GM12878 (cell line): ENCODE measurements at regions of chr19 and their contacts with region 1.

Region 1: DNA sequence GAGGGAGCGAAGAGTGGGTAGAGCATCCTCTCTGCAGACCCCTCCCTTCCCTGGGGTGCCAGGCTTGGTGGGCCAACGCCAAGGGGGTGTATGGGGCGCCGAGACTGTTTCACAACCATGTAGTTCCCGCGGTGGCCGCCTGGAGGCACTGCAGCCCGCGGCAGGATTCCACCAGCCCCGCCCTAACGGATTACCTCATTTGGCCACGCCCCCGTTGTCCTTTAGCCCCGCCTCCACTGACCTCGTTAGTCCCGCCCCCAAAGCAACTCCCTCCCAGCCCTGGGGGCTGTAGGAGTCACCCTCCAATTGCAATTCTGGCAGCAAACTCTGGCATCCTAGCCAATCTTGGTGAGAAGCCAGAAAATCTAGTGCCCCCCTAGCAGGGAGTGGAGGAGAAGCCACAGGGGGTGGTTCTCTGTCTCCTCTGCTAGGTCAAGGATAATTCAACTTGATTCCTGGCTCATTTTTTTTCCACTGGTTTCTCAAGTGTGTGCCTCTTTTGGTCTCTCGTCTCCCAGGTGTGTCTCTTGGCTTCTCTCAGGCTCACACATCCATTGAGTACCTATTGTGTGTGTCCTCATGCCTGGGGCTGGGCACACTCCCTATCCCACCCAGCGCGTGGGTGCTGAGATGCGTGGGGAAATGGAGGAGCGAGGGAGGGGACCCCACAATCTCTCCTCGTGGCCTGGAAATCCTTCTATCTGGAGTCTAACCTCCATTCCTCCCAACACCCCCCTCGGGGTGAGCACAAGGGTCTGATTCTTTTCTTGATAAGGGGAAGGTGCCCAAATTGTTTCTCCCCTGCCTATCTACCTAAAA is 2.0 kb downstream of the OLFM2 start:
- DNase-seq: no peak
- ATAC-seq: peak; percentile 85
- H3K4me3 ChIP-seq: no peak overlapping the region
- H3K27ac ChIP-seq: no peak overlapping the region
- H3K4me1 ChIP-seq: no peaks in the 10 kb centered on the region
- H3K27me3 ChIP-seq: no peaks in the 10 kb centered on the region
- CTCF ChIP-seq: peak; percentile 96 to 97 (median 97); a peak in 5 of 6 replicates
- EP300 ChIP-seq: peak in 1 of 2 experiments; percentile 12; a peak in 1 of 4 replicates
- POLR2A ChIP-seq: no peak
- RAD21 ChIP-seq: peak; percentile 82

Region 2: GRCh38 chr19:9865732-9866501 is 68.4 kb before region 1 on chr19:
- CTCF ChIA-PET with region 1: no interaction called
- POLR2A ChIA-PET with region 1: no interaction called
- RAD21 ChIA-PET with region 1: no interaction called
- SMC1A ChIA-PET with region 1: no interaction called
- in situ Hi-C with region 1: no loop called
- intact Hi-C with region 1: no loop called
- DNase-seq: no peak
- ATAC-seq: peak; percentile 46
- H3K4me3 ChIP-seq: no peak overlapping the region
- H3K27ac ChIP-seq: no peak overlapping the region
- H3K4me1 ChIP-seq: no peaks in the 10 kb centered on the region
- H3K27me3 ChIP-seq: no peaks in the 10 kb centered on the region
- CTCF ChIP-seq: no peak
- EP300 ChIP-seq: no peak
- POLR2A ChIP-seq: no peak
- RAD21 ChIP-seq: no peak

Region 3: GRCh38 chr19:9914315-9915207 is 19.8 kb before region 1 on chr19:
- CTCF ChIA-PET with region 1: interaction called, 11 read pairs
- POLR2A ChIA-PET with region 1: no interaction called
- RAD21 ChIA-PET with region 1: no interaction called
- SMC1A ChIA-PET with region 1: no interaction called
- in situ Hi-C with region 1: no loop called
- intact Hi-C with region 1: no loop called
- DNase-seq: no peak
- ATAC-seq: peak; percentile 79
- H3K4me3 ChIP-seq: peak overlapping the region; percentile 52; the same call in 1 of the 2 replicates
- H3K27ac ChIP-seq: no peak overlapping the region
- H3K4me1 ChIP-seq: peaks cover 6% of the 10 kb centered on the region
- H3K27me3 ChIP-seq: peaks cover 6 to 9% of the 10 kb centered on the region in 2 experiments
- CTCF ChIP-seq: peak; percentile 39 to 43 (median 39); a peak in 4 of 6 replicates
- EP300 ChIP-seq: no peak
- POLR2A ChIP-seq: no peak
- RAD21 ChIP-seq: peak; percentile 42

Region 4: GRCh38 chr19:10000171-10000826 is 66.0 kb after region 1 on chr19:
- CTCF ChIA-PET with region 1: interaction called, 60 read pairs
- POLR2A ChIA-PET with region 1: no interaction called
- RAD21 ChIA-PET with region 1: interaction called, 9 read pairs
- SMC1A ChIA-PET with region 1: interaction called, 7 read pairs
- in situ Hi-C with region 1: no loop called
- intact Hi-C with region 1: loop called (anchors 2 kb)
- DNase-seq: no peak
- ATAC-seq: peak; percentile 42; the same call in 2 of the 3 replicates
- H3K4me3 ChIP-seq: no peak overlapping the region
- H3K27ac ChIP-seq: no peak overlapping the region
- H3K4me1 ChIP-seq: peaks cover under 1% of the 10 kb centered on the region; the same call in 1 of the 2 replicates
- H3K27me3 ChIP-seq: no peaks in the 10 kb centered on the region
- CTCF ChIP-seq: peak; percentile 70 to 87 (median 77)
- EP300 ChIP-seq: no peak
- POLR2A ChIP-seq: no peak
- RAD21 ChIP-seq: peak; percentile 73

Region 5: GRCh38 chr19:10112895-10113591 is 178.7 kb after region 1 on chr19:
- CTCF ChIA-PET with region 1: interaction called, 24 read pairs
- POLR2A ChIA-PET with region 1: interaction called, 5 read pairs
- RAD21 ChIA-PET with region 1: interaction called, 12 read pairs
- SMC1A ChIA-PET with region 1: interaction called, 5 read pairs
- in situ Hi-C with region 1: no loop called
- intact Hi-C with region 1: loop called (anchors 1 kb)
- DNase-seq: no peak
- ATAC-seq: peak; percentile 72
- H3K4me3 ChIP-seq: peak overlapping the region; percentile 51; the same call in 1 of the 2 replicates
- H3K27ac ChIP-seq: peak overlapping the region; percentile 62
- H3K4me1 ChIP-seq: peaks cover 40% of the 10 kb centered on the region
- H3K27me3 ChIP-seq: no peaks in the 10 kb centered on the region
- CTCF ChIP-seq: peak; percentile 67 to 96 (median 79)
- EP300 ChIP-seq: no peak
- POLR2A ChIP-seq: no peak; the same call in 1 of the 2 replicates
- RAD21 ChIP-seq: peak; percentile 81

Region 6: GRCh38 chr19:10388957-10389356 is 454.6 kb after region 1 on chr19:
- CTCF ChIA-PET with region 1: interaction called, 22 read pairs
- POLR2A ChIA-PET with region 1: no interaction called
- RAD21 ChIA-PET with region 1: interaction called, 17 read pairs
- SMC1A ChIA-PET with region 1: interaction called, 4 read pairs
- in situ Hi-C with region 1: loop called (anchors 5 kb)
- intact Hi-C with region 1: loop called (anchors 2 kb)
- DNase-seq: peak; percentile 69
- ATAC-seq: peak; percentile 53
- H3K4me3 ChIP-seq: no peak overlapping the region
- H3K27ac ChIP-seq: no peak overlapping the region
- H3K4me1 ChIP-seq: peaks cover 10% of the 10 kb centered on the region
- H3K27me3 ChIP-seq: no peaks in the 10 kb centered on the region
- CTCF ChIP-seq: peak; percentile 88 to 95 (median 92)
- EP300 ChIP-seq: no peak
- POLR2A ChIP-seq: peak; percentile 46; the same call in 1 of the 2 replicates
- RAD21 ChIP-seq: peak; percentile 84